Caco-2 (cell line): ENCODE measurements at regions of chr2 and their contacts with region 1.

Region 1: GRCh38 chr2:171433763-171434670 is at the starts of genes DCAF17 and METTL8:
- DNase-seq: peak; percentile 98 to 99
- H3K4me3 ChIP-seq: peak within 1 kb of the TSS; percentile 89
- H3K4me3 Mint-ChIP-seq: peak within 1 kb of the TSS; percentile 90
- H3K27ac Mint-ChIP-seq: peak within 1 kb of the TSS; percentile 98
- H3K4me1 ChIP-seq: peaks cover 7% of the 10 kb centered on the region
- H3K4me1 Mint-ChIP-seq: peaks cover 16% of the 10 kb centered on the region
- H3K27me3 ChIP-seq: no peaks in the 10 kb centered on the region
- H3K27me3 Mint-ChIP-seq: no peaks in the 10 kb centered on the region
- CTCF ChIP-seq: peak; percentile 69 to 76
- total RNA-seq, gene DCAF17: 20.8 and 22.7 TPM in 2 replicates
- total RNA-seq, gene METTL8: 25.7 and 28.5 TPM in 2 replicates

Region 2: DNA sequence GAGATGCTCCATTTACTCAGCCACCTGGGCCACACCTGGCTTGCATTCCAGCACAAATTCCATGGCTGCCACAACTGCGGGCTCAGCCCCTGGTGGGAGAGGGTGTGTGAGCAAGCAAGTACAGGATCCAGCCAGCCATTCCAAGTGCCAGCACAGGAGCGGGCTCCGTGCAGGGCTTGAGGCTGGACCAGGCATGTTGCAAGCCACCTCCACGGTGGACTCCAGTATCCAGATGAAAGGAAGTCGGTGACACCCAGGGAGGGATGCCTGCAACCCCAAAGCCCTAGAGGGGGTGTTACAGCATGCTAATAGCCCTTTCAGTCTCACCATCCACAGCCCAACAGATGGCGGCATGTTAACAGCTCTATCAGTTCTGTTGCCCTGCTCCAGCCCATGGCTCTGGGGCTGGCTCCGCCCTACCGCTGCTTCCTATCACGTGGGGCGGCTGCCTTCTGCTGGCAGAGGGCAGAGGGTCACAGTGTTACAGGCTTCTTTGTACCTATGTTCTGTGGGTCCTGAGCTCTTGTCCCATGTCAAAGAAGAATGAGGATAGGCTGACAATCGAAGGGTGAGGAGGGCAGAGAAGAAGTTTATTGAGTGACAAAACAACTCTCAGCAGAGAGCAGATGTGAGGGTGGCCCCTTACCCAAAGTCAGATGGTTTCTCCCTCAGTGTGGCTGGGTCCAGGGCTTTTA is 516.7 kb before region 1 on chr2:
- CTCF ChIA-PET with region 1: no interaction called
- POLR2A ChIA-PET with region 1: no interaction called
- intact Hi-C with region 1: no loop called
- DNase-seq: no peak
- H3K4me3 ChIP-seq: no peak overlapping the region
- H3K4me3 Mint-ChIP-seq: no peak overlapping the region
- H3K27ac Mint-ChIP-seq: no peak overlapping the region
- H3K4me1 ChIP-seq: no peaks in the 10 kb centered on the region
- H3K4me1 Mint-ChIP-seq: no peaks in the 10 kb centered on the region
- H3K27me3 ChIP-seq: no peaks in the 10 kb centered on the region
- H3K27me3 Mint-ChIP-seq: peaks cover 2% of the 10 kb centered on the region
- CTCF ChIP-seq: no peak

Region 3: DNA sequence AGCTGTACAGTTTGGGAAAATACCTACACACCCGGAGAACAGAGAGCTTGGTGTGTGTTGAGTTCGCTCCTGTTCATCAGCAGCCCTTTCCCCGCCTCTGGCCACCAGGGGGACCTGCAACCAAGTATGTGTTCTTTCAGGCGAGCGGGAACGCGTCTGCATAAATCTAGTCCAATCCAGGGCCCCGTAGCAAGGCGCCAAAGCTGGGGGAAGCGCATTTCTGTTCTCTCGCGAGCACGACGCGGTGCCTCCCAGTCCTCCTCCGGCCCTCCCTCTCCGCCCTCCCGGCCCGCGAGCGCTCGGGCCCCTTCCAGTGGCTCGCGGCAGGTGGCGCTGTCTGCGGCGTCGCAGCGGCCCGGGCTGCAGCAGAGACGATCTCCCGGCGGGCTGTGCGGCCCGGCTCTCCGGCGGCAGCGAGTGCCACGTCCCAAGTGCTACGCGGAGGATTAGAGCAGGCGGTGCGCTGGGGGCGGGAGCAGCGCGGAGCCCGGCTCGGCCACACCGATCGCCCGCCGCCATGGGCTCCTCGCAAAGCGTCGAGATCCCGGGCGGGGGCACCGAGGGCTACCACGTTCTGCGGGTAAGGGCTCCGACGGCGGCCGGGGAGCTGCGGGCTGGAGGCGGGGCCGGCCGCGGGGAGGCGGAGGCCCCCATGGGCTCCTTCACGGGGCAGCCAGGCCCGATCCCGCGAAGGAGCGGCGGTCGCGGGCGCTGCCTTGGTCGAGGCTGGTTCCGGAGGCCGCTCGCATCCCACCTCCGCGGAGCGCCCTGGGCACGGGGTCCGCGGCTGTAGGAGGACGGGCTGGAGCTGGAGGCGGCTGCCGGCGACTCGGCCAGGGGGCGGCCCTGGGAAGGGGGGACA is 505.0 kb before region 1 on chr2 and contains the start of gene GORASP2:
- CTCF ChIA-PET with region 1: interaction called, 3 read pairs
- POLR2A ChIA-PET with region 1: interaction called, 7 read pairs
- intact Hi-C with region 1: loop called (anchors 2 kb)
- DNase-seq: peak; percentile 98 to 100
- H3K4me3 ChIP-seq: peak within 1 kb of the TSS; percentile 98
- H3K4me3 Mint-ChIP-seq: peak within 1 kb of the TSS; percentile 98
- H3K27ac Mint-ChIP-seq: peak within 1 kb of the TSS; percentile 99
- H3K4me1 ChIP-seq: peaks cover 21% of the 10 kb centered on the region
- H3K4me1 Mint-ChIP-seq: peaks cover 29% of the 10 kb centered on the region
- H3K27me3 ChIP-seq: no peaks in the 10 kb centered on the region
- H3K27me3 Mint-ChIP-seq: no peaks in the 10 kb centered on the region
- CTCF ChIP-seq: peak; percentile 87 to 91
- total RNA-seq, gene GORASP2: 124 and 143 TPM in 2 replicates

Region 4: GRCh38 chr2:171416009-171416926 is 17.7 kb before region 1 on chr2:
- CTCF ChIA-PET with region 1: interaction called, 15 read pairs
- POLR2A ChIA-PET with region 1: interaction called, 7 read pairs
- intact Hi-C with region 1: loop called (anchors 1 kb)
- DNase-seq: peak; percentile 89 to 94
- H3K4me3 ChIP-seq: no peak overlapping the region
- H3K4me3 Mint-ChIP-seq: peak overlapping the region; percentile 61
- H3K27ac Mint-ChIP-seq: peak overlapping the region; percentile 63
- H3K4me1 ChIP-seq: peaks cover 3% of the 10 kb centered on the region; the same call in 1 of the 2 replicates
- H3K4me1 Mint-ChIP-seq: peaks cover 9% of the 10 kb centered on the region
- H3K27me3 ChIP-seq: no peaks in the 10 kb centered on the region
- H3K27me3 Mint-ChIP-seq: no peaks in the 10 kb centered on the region
- CTCF ChIP-seq: peak; percentile 75 to 92

Region 5: GRCh38 chr2:171522052-171522787 is 88.2 kb after region 1 on chr2 and contains the start of gene CYBRD1:
- CTCF ChIA-PET with region 1: no interaction called
- POLR2A ChIA-PET with region 1: interaction called, 3 read pairs
- intact Hi-C with region 1: loop called (anchors 5 kb)
- DNase-seq: peak; percentile 50 to 59
- H3K4me3 ChIP-seq: peak within 1 kb of the TSS; percentile 50
- H3K4me3 Mint-ChIP-seq: peak within 1 kb of the TSS; percentile 82
- H3K27ac Mint-ChIP-seq: no peak within 1 kb of the TSS
- H3K4me1 ChIP-seq: peaks cover 11% of the 10 kb centered on the region; the same call in 1 of the 2 replicates
- H3K4me1 Mint-ChIP-seq: no peaks in the 10 kb centered on the region
- H3K27me3 ChIP-seq: no peaks in the 10 kb centered on the region
- H3K27me3 Mint-ChIP-seq: peaks cover 8% of the 10 kb centered on the region
- CTCF ChIP-seq: no peak
- total RNA-seq, gene CYBRD1: 6.5 and 9.7 TPM in 2 replicates